ENCODE measurements at regions of chr2 and their contacts with region 1.

Region 1: DNA sequence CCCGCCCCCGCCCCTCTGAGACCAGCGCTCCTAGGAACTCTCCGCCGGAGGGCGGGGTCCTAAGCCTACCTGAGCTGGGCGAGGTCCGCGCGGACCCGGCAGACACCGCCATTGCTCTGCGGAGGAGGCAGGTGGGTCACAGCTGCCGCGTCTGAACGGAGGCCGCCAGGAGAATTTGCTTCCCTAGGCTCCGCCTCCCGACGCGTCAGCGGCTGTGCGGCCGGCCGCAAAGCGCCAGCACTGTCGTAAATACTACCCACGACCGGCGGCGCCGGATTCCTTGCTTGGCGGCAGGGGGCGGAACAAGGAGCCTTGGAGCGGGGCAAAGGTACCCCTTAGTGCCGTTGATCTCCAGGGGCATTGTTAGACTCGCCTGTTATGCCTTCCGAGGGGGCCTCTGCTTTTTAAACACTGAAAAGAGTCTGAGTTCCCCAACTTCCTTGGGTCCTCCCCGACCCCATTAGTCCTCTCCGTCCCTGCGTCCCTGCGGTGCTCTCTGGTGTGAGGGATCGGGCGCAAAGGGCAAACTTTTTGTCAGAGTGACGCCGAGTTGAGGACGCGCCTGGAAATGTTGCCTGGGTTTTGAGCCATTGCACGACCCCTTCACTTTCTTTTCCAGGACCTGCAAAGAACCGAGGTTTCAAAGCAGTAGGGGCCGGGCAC is at the start of gene GGCX:
- DNase-seq: peak; percentile 99
- total RNA-seq, gene GGCX: 26.3 to 31.2 TPM

Region 2: DNA sequence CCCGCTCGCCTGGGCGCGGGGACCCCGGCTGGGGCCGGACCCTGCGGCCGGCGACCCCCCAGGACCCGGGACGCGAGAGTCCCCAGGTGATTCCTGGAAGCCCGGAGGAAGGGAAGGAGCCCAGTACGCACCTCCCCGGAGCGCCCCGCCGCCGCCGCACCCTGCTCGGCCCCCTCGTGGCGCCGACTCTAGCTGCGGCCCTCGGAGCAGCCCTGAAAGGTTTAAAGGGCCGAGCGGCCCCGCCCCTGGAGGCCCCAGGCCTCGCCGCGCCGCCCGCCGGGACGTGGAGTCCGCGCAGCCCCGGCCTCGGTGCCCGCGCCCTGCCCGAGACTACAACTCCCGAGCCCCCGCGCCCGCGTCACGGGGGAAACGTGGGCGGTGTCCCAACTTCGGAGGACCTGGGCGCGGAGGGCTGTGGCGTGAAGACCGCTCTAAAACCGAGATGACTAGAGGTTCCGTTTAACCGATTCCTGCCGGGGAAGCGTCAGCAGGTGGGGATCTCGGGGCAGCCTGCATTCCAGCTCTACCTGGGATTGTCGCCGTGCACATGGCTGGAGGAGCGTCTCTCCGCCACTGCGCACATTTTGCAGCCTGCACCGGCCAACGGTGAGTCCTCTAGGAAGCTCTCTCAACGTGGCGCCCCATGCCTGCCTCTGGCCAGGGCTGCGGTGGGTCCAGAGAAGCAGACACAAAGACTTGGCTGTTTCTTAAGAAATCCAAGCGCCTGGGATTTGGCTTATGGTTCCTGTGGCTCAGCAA is 41.2 kb after region 1 on chr2 and contains the start of gene TMEM150A:
- intact Hi-C with region 1: loop called in 1 of 2 experiments (anchors 5 kb)
- DNase-seq: peak; percentile 98
- total RNA-seq, gene TMEM150A: 18.3 to 18.5 TPM